Panc1 (cell line): ENCODE measurements at regions of chr5 and their contacts with region 1.

Region 1: DNA sequence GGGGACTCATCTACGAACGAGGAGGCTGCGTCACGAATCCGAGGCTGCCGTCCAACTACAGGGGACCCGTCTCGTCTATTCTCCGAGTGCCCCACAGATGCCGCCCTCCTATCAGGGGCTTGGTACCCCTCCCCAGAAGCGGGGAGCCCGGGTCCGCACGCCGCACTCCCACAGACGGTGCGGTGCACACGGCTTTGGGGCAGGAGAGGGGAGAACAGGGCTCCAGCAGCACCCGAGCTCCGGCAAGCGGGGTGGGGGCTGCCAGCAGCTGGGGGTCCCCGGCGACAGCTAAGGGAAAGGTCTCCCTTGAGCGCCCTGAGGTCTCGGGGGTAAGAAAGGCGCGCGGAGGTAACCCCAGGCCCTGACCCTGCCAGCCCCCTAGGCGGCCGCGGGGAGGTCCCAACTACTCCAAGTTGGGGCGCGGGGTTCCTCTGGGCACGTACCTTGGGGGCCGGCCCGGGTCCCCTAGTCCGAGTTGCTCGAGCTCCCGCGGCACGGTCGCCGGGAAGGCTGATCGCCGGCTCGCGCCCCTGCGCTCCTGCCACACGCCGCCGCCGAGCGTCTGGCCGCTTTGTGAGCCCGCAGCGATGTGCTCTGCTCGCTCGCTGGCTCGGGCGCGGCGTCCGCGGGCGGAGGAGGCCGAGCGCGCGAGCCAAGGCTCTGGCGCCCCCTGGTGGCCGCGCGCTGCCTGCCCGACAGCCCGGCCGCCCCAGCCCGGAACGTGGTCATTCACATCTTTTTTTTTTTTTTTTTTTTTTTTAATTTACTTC is at the start of gene SPOCK1:
- DNase-seq: no peak
- ATAC-seq: peak; percentile 99
- H3K4me3 ChIP-seq: peak within 1 kb of the TSS; percentile 24 to 48
- H3K27ac ChIP-seq: no peak within 1 kb of the TSS
- H3K4me1 ChIP-seq: no peaks in the 10 kb centered on the region
- H3K27me3 ChIP-seq: no peaks in the 10 kb centered on the region; the same call in 1 of the 2 replicates
- CTCF ChIP-seq: peak; percentile 95
- total RNA-seq, gene SPOCK1: 15.6 TPM

Region 2: DNA sequence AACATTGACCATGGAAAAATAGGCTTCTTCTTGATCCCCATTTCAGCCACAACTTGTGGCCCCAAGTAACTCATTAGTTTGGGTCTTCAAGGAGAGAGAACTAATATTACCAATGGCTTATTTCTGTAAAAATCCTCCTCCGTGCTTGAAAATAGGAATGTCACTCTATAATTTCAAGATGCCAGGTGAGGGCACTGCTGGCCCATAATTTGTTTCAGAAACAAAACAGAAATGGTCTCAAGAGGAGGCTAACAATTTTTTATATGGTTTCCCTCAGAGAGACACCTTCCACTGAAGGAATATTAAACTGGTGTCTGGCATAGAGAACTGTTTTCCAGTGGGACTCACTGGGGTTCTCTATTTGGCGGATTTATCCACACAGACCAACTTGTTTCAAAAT is 696.5 kb before region 1 on chr5:
- CTCF ChIA-PET with region 1: no interaction called
- POLR2A ChIA-PET with region 1: no interaction called
- in situ Hi-C with region 1: no loop called
- intact Hi-C with region 1: loop called (anchors 5 kb)
- DNase-seq: peak; percentile 48
- ATAC-seq: no peak
- H3K4me3 ChIP-seq: no peak overlapping the region
- H3K27ac ChIP-seq: no peak overlapping the region
- H3K4me1 ChIP-seq: no peaks in the 10 kb centered on the region
- H3K27me3 ChIP-seq: no peaks in the 10 kb centered on the region; the same call in 1 of the 2 replicates
- CTCF ChIP-seq: peak; percentile 34; the same call in 1 of the 2 replicates

Region 3: DNA sequence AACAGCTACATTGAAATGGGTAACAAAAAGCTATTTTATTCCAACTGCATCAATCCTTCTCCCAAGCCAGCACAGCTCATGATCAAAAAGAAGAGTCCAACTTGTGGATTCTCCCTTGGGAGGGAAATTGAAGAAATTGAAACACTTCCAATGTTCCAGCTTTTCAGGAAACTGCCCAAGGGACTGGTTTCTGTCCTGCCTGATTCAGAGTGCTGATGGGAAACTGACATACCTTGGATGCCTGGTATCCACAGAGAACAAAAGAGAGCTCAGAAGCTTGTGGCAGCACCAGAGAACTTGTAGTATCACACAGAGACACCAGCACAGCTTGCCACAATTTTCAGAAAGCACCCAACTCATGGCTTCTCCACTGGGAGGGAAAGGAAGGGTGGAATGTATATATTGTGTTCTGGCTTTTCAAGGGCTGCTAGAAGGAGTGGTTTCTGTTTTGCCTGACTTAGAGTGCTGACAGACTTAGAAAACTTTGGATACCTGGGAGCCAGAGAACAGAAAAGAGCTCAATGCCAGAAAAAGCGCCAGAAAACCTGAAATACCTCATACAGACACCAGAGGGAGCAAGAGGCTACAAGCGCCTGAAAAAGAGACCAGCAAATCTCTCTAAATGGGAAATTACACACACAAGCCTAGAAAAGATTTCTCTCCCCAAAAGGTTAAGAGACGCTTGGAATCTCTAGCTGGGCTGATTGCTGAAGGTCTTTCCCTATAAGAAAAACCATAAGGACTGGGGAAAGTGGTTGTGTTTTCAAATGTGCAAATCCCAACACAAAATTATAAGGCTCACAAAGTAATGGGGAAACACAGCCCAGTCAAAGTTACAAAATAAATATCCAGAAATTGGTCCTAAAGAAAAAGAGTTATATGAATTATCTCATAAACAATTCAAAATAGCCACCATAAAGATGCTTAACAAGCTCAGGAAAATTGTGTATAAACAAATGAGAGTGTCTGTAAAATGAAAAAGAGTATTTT is 178.6 kb before region 1 on chr5:
- CTCF ChIA-PET with region 1: interaction called, 7 read pairs
- POLR2A ChIA-PET with region 1: no interaction called
- in situ Hi-C with region 1: no loop called
- intact Hi-C with region 1: loop called (anchors 2 kb)
- DNase-seq: no peak
- ATAC-seq: peak; percentile 56; the same call in 1 of the 2 replicates
- H3K4me3 ChIP-seq: no peak overlapping the region
- H3K27ac ChIP-seq: no peak overlapping the region
- H3K4me1 ChIP-seq: no peaks in the 10 kb centered on the region
- H3K27me3 ChIP-seq: peaks cover 5% of the 10 kb centered on the region
- CTCF ChIP-seq: peak; percentile 83

Region 4: GRCh38 chr5:137344723-137345322 is 154.1 kb before region 1 on chr5:
- CTCF ChIA-PET with region 1: no interaction called
- POLR2A ChIA-PET with region 1: no interaction called
- in situ Hi-C with region 1: no loop called
- intact Hi-C with region 1: loop called (anchors 5 kb)
- DNase-seq: peak; percentile 61
- ATAC-seq: no peak; the same call in 1 of the 2 replicates
- H3K4me3 ChIP-seq: no peak overlapping the region
- H3K27ac ChIP-seq: no peak overlapping the region
- H3K4me1 ChIP-seq: no peaks in the 10 kb centered on the region
- H3K27me3 ChIP-seq: no peaks in the 10 kb centered on the region
- CTCF ChIP-seq: peak; percentile 80

Region 5: GRCh38 chr5:137605411-137605810 is 106.5 kb after region 1 on chr5:
- CTCF ChIA-PET with region 1: no interaction called
- POLR2A ChIA-PET with region 1: no interaction called
- in situ Hi-C with region 1: no loop called
- intact Hi-C with region 1: no loop called
- DNase-seq: no peak
- ATAC-seq: no peak
- H3K4me3 ChIP-seq: no peak overlapping the region
- H3K27ac ChIP-seq: no peak overlapping the region
- H3K4me1 ChIP-seq: no peaks in the 10 kb centered on the region
- H3K27me3 ChIP-seq: peaks cover 23% of the 10 kb centered on the region
- CTCF ChIP-seq: 0 out of 2 replicates have a peak, but pooled peaks have one; percentile 15